ENCODE measurements at regions of chr3 and their contacts with region 1.

Region 1: GRCh38 chr3:153595186-153595815 is 433.3 kb downstream of the RAP2B start:
- DNase-seq: peak; percentile 63
- H3K4me3 Mint-ChIP-seq: no peak overlapping the region
- H3K27ac Mint-ChIP-seq: no peak overlapping the region
- H3K4me1 Mint-ChIP-seq: peaks cover 8% of the 10 kb centered on the region
- H3K27me3 Mint-ChIP-seq: no peaks in the 10 kb centered on the region
- CTCF ChIP-seq: peak; percentile 78

Region 2: GRCh38 chr3:153026026-153026425 is 569.3 kb before region 1 on chr3:
- CTCF ChIA-PET with region 1: interaction called, 3 read pairs
- POLR2A ChIA-PET with region 1: no interaction called
- intact Hi-C with region 1: loop called (anchors 1 kb)
- DNase-seq: peak; percentile 57
- H3K4me3 Mint-ChIP-seq: no peak overlapping the region
- H3K27ac Mint-ChIP-seq: no peak overlapping the region
- H3K4me1 Mint-ChIP-seq: no peaks in the 10 kb centered on the region
- H3K27me3 Mint-ChIP-seq: no peaks in the 10 kb centered on the region
- CTCF ChIP-seq: peak; percentile 62

Region 3: GRCh38 chr3:153291056-153291685 is 304.1 kb before region 1 on chr3:
- CTCF ChIA-PET with region 1: interaction called, 12 read pairs
- POLR2A ChIA-PET with region 1: interaction called, 8 read pairs
- intact Hi-C with region 1: loop called (anchors 1 kb)
- DNase-seq: peak; percentile 65
- H3K4me3 Mint-ChIP-seq: no peak overlapping the region
- H3K27ac Mint-ChIP-seq: no peak overlapping the region
- H3K4me1 Mint-ChIP-seq: peaks cover 40% of the 10 kb centered on the region
- H3K27me3 Mint-ChIP-seq: no peaks in the 10 kb centered on the region
- CTCF ChIP-seq: peak; percentile 52

Region 4: DNA sequence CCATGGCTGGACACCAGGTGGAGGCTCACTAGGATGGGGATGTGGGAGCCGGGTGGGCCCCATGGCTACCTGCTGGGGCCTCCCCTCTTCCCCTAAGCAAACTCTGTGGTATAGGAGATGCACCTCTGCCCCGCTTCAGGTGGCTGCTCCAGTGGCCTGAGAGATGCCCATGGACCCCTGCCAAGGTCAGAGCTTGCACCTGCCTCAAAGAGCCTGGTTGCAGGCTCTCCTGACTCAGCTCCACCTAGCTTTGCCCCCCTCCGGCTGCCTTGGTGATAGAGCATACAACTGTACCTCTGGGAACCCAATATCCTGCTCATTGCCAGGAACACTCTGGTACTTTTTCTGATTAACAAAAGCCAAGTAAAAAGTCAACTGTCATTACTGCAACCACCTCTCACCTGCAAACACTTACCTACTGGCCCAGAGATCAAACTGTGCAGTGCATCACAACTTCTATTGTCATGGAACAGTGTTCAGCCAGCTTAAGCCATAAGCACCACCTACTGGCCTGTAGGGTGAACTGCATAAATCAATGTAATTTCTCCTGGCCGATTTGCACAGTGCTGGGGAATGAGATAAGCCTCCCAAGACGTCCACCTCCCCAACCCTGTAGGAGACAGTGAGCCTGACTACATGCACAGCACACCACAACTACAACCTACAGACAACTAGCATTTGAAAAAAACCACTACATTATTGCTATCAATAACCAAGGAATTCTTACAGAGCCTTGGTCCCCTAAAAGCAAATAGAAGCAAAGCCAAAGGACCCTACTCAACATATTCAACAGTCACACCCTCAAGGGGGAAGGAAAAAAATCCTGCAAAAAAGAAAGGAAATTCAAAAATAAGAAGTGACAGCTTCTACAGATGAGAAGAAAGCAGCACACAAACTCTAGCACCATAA is 173.5 kb after region 1 on chr3:
- CTCF ChIA-PET with region 1: interaction called, 18 read pairs
- POLR2A ChIA-PET with region 1: no interaction called
- intact Hi-C with region 1: loop called (anchors 2 kb)
- DNase-seq: peak; percentile 59
- H3K4me3 Mint-ChIP-seq: no peak overlapping the region
- H3K27ac Mint-ChIP-seq: no peak overlapping the region
- H3K4me1 Mint-ChIP-seq: peaks cover 6% of the 10 kb centered on the region
- H3K27me3 Mint-ChIP-seq: no peaks in the 10 kb centered on the region
- CTCF ChIP-seq: peak; percentile 81

Region 5: DNA sequence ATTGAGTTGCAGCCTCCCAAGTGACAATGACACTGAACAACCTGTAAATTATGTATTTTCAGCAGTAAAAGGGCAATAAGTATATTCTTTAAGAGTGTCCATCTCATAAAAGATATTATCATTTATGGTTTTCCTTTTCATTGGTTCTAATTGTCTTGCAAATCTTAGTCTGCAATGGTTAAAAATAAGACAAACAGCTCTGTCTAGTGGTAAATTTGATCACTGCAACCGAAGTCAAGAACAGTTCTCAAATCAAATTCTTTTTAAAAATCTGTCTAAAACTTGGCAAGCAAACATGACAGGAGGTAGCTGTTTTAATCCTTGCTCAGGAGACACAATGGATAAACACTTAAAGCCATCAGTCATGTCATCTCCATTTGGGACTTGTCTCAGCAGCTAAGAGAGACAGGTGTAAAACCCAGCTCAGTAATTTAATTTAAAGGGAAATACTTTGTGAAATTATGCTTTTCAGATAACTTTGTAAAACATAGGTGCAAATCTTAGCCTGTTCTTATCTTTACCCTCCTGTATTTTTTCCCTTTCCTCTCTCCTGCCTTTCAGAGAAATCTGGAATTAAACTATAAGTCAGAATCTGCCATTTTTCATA is 375.5 kb after region 1 on chr3:
- CTCF ChIA-PET with region 1: interaction called, 6 read pairs
- POLR2A ChIA-PET with region 1: no interaction called
- intact Hi-C with region 1: loop called (anchors 10 kb)
- DNase-seq: peak; percentile 30
- H3K4me3 Mint-ChIP-seq: no peak overlapping the region
- H3K27ac Mint-ChIP-seq: no peak overlapping the region
- H3K4me1 Mint-ChIP-seq: no peaks in the 10 kb centered on the region
- H3K27me3 Mint-ChIP-seq: no peaks in the 10 kb centered on the region
- CTCF ChIP-seq: peak; percentile 33

Measured in MCF 10A (cell line).